Endothelial cell of umbilical vein (primary cell): ENCODE measurements at regions of chr3 and their contacts with region 1.

Region 1: DNA sequence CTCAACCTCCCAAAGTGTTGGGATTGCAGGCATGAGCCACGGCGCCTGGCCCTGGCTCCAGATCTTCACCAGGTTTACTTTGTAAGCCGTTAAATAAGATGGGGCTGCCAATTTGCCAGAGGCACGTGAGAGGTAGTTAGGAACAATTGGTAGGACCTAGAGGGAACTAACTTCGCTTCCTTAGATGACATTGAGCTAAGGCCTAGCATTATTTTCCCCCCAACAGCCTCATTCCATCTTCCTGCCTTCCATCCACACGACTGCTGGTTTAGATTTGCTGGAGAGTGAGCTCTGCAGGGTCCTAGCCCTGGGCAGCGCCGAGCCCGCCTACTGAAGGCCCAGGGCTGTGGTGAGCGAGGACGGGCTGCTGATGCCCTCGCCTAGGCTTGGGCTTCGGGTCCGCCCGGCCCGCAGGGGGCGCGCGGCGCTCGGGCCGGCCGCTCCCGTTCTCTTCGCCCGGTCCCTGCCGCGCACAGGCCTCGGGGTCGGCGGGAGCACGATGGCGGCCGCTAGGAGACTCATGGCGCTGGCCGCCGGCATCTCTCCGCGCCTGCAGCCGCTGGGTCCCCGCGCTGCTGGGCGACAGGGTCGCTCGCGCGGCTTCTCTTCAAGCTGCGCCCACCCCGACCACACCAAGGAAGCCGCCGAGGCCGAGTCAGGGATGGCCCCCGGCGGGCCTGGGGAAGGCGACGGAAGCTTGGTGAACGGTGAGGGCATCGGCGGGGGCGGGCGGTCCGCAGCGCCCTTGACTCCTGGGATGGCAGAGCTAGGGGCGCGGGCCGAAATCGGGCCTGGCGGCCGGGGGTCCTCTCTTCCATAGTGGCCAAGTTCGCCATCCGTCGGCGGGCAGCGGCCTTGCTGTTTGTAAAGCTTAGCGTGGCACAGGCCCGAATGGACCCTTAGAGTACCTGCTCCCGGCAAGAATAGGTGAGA is 21.9 kb downstream of the DHX30 start:
- DNase-seq: peak; percentile 85
- H3K4me3 ChIP-seq: peak overlapping the region; percentile 78 to 97 (median 82)
- H3K27ac ChIP-seq: peak overlapping the region; percentile 68
- H3K4me1 ChIP-seq: peaks cover 19% of the 10 kb centered on the region
- H3K27me3 ChIP-seq: no peaks in the 10 kb centered on the region
- CTCF ChIP-seq: peak; percentile 82 to 96
- POLR2A ChIP-seq: peak; percentile 83

Region 2: DNA sequence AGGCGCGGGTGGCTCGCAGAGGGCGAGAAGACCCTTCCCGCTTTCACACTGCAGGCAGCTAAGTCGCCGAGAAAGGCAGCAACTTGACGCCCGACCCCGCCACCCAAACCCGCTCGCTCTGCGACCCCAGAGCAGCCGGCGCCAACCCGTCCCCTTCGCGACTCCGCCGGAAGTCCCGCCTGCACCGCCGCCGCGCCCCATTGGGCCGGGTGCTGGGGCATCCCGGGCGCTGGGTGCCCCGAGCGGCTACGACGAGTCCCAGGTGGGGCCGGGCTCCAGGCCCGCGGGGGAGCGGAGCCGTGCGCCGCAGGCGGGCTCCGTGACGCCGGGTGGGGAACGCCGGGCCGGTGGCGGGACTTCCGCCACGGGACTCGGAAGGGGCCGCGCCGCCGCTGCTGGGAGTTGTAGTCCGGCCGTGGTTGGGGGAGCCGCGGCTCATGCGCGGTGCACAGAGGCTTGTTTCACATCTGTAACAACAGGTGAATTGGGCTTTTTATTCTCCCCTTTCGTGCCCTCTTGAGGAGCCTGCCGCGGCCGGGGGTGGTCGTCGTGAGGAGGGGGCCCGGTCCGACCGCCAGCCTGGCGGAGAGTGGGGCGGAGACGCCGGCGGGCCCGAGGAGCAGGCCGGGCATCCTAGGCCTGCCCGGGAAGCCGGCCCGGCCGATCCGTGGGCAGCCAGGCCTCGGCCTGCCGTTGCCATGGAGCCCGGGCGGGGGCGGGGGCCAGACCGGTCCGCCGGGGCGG is 21.9 kb before region 1 on chr3 and contains the start of gene DHX30:
- CTCF ChIA-PET with region 1: interaction called, 5 read pairs
- POLR2A ChIA-PET with region 1: no interaction called
- dilution Hi-C with region 1: no loop called
- intact Hi-C with region 1: loop called (anchors 1 kb)
- DNase-seq: peak; percentile 91
- H3K4me3 ChIP-seq: peak within 1 kb of the TSS; percentile 61 to 94 (median 89)
- H3K27ac ChIP-seq: peak within 1 kb of the TSS; percentile 88
- H3K4me1 ChIP-seq: peaks cover 7% of the 10 kb centered on the region
- H3K27me3 ChIP-seq: no peaks in the 10 kb centered on the region
- CTCF ChIP-seq: no peak
- POLR2A ChIP-seq: peak; percentile 48
- total RNA-seq, gene DHX30: 85.2 and 86.9 TPM in 2 replicates

Region 3: GRCh38 chr3:47813551-47814177 is 11.1 kb before region 1 on chr3:
- CTCF ChIA-PET with region 1: interaction called, 29 read pairs
- POLR2A ChIA-PET with region 1: interaction called, 5 read pairs
- dilution Hi-C with region 1: no loop called
- intact Hi-C with region 1: no loop called
- DNase-seq: no peak
- H3K4me3 ChIP-seq: no peak overlapping the region
- H3K27ac ChIP-seq: no peak overlapping the region
- H3K4me1 ChIP-seq: no peaks in the 10 kb centered on the region
- H3K27me3 ChIP-seq: no peaks in the 10 kb centered on the region
- CTCF ChIP-seq: no peak
- POLR2A ChIP-seq: no peak

Region 4: DNA sequence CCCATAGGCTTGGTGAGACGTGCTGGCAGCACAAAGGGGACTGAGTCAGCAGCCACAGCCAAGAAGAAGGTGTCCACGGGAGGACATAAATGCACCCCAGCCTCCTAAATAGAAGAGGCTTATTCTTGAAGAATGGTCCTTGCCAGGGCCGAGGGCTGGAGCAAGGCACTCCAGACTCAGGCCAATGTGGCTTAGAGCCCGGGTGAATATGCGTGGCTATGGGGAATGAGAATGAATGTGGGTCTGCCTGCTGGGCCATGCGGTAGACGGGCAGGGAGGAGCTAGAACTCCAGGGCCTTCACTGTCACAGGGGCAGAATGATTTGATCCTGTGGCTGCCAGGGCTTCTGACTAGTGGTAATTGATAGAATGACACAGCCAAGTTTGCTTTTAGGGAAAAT is 12.2 kb after region 1 on chr3:
- CTCF ChIA-PET with region 1: interaction called, 69 read pairs
- POLR2A ChIA-PET with region 1: interaction called, 6 read pairs
- dilution Hi-C with region 1: no loop called
- intact Hi-C with region 1: no loop called
- DNase-seq: no peak
- H3K4me3 ChIP-seq: no peak overlapping the region
- H3K27ac ChIP-seq: no peak overlapping the region
- H3K4me1 ChIP-seq: no peaks in the 10 kb centered on the region
- H3K27me3 ChIP-seq: no peaks in the 10 kb centered on the region
- CTCF ChIP-seq: no peak
- POLR2A ChIP-seq: no peak